Uterus (tissue), 4 donors: ENCODE measurements at regions of chr4 and their contacts with region 1.

Region 1: GRCh38 chr4:165464813-165465381 is 86.1 kb downstream of the CPE start:
- DNase-seq: no peak
- H3K4me3 ChIP-seq: no peak overlapping the region
- H3K27ac ChIP-seq: no peak overlapping the region
- H3K4me1 ChIP-seq: no peaks in the 10 kb centered on the region
- H3K27me3 ChIP-seq: no peaks in the 10 kb centered on the region
- CTCF ChIP-seq: peak; percentile 62 to 78 (median 72)
- POLR2A ChIP-seq: no peak

Region 2: DNA sequence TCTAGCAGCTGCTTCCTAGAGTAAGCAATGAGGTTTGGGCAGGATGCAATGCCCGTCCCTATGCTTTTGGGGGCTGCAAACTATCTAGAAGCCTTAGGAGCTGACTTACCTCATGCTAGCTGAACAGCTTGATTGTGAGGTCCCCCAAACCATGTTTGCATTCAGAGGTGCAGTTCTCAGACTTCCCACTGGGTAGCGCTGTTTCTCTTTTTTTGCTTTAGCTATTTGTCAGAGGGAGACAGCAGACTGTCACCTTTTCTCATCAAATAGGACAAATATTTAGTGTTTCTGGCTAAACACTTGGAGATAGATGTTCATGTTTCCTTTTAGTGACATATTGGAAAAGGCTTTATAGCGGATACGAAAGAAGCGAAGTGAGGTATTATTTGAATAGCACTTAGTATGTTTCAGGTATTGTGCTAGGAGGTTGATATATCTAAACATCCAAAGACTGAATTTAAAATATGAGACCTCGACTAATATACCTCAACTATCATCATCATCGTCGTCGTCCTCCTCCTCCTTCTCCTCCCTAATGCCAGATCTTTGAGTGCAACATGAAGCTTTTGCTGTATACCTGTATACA is 333.6 kb before region 1 on chr4:
- intact Hi-C with region 1: loop called (anchors 5 kb)
- DNase-seq: peak; percentile 41 to 54
- H3K4me3 ChIP-seq: no peak overlapping the region
- H3K27ac ChIP-seq: no peak overlapping the region
- H3K4me1 ChIP-seq: no peaks in the 10 kb centered on the region
- H3K27me3 ChIP-seq: no peaks in the 10 kb centered on the region
- CTCF ChIP-seq: peak; percentile 69 to 88 (median 82)
- POLR2A ChIP-seq: no peak

Region 3: DNA sequence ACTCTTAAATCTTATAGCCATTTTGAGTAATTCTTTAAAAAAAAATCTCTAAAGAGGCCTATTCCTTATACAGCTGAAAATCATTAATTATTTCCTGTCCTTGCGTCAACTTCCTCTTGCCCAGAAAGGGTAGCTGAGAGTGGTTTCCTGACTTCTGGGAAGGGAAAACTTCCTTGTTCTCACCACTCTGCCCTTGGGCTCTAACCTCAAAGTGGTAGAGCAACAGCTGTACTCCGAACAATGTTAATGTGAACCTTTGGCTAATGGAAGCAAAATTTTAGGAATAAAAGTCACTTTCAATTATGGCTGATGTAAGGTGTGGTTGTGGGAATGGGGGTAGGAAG is 242.3 kb before region 1 on chr4:
- intact Hi-C with region 1: no loop called
- DNase-seq: peak in 1 of 2 donors; percentile 31
- H3K4me3 ChIP-seq: no peak overlapping the region
- H3K27ac ChIP-seq: peak overlapping the region in 1 of 2 donors; percentile 64
- H3K4me1 ChIP-seq: no peaks in the 10 kb centered on the region
- H3K27me3 ChIP-seq: no peaks in the 10 kb centered on the region
- CTCF ChIP-seq: no peak
- POLR2A ChIP-seq: no peak

Region 4: GRCh38 chr4:165355900-165356300 is 109.0 kb before region 1 on chr4:
- intact Hi-C with region 1: loop called (anchors 10 kb)
- DNase-seq: peak in 1 of 2 donors; percentile 18
- H3K4me3 ChIP-seq: no peak overlapping the region
- H3K27ac ChIP-seq: no peak overlapping the region
- H3K4me1 ChIP-seq: no peaks in the 10 kb centered on the region
- H3K27me3 ChIP-seq: no peaks in the 10 kb centered on the region
- CTCF ChIP-seq: peak in 3 of 4 experiments; percentile 17 to 38 (median 26)
- POLR2A ChIP-seq: no peak